OCI-LY7 (cell line): ENCODE measurements at regions of chr10 and their contacts with region 1.

Region 1: GRCh38 chr10:71696628-71697326 is 22.8 kb downstream of the C10orf105 start:
- DNase-seq: peak; percentile 77
- H3K4me3 ChIP-seq: no peak overlapping the region
- H3K27ac ChIP-seq: no peak overlapping the region
- H3K4me1 ChIP-seq: peaks cover 46% of the 10 kb centered on the region
- CTCF ChIP-seq: peak; percentile 99

Region 2: DNA sequence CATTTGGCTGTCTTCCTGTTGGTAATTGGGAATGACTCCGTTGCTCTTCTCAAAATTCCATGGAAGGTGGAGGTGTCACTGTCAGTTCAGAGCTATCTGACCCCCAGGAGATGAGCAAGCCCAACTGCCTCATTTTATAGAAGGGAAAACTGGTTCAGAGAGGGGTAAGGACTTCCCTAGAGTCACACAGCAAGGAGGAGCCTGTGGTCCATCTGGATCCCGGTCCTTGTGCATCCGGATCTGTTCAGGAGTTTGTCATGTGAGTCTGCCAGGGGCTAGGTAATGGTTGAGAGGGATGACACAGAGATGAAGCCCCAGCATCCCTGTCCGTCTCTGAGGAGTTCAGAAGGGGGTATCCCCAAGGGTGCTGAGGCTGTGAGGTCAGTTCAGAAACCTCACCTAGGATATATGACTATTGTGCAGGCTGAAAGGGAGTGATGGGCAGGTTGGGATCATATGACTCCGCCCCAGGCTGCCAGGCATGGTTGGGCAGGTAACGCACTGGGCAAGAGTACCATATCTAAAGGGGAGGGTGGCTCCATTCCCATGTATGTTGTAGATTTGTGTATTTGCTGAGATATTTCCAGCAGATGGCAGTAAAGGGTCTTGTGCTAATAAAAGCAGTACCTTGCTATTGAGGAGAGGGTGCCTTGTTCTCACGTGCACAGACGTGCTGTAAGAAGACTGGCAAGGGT is 393.8 kb before region 1 on chr10:
- CTCF ChIA-PET with region 1: no interaction called
- POLR2A ChIA-PET with region 1: no interaction called
- intact Hi-C with region 1: no loop called
- DNase-seq: peak; percentile 79
- H3K4me3 ChIP-seq: no peak overlapping the region
- H3K27ac ChIP-seq: no peak overlapping the region
- H3K4me1 ChIP-seq: no peaks in the 10 kb centered on the region
- CTCF ChIP-seq: peak; percentile 78

Region 3: DNA sequence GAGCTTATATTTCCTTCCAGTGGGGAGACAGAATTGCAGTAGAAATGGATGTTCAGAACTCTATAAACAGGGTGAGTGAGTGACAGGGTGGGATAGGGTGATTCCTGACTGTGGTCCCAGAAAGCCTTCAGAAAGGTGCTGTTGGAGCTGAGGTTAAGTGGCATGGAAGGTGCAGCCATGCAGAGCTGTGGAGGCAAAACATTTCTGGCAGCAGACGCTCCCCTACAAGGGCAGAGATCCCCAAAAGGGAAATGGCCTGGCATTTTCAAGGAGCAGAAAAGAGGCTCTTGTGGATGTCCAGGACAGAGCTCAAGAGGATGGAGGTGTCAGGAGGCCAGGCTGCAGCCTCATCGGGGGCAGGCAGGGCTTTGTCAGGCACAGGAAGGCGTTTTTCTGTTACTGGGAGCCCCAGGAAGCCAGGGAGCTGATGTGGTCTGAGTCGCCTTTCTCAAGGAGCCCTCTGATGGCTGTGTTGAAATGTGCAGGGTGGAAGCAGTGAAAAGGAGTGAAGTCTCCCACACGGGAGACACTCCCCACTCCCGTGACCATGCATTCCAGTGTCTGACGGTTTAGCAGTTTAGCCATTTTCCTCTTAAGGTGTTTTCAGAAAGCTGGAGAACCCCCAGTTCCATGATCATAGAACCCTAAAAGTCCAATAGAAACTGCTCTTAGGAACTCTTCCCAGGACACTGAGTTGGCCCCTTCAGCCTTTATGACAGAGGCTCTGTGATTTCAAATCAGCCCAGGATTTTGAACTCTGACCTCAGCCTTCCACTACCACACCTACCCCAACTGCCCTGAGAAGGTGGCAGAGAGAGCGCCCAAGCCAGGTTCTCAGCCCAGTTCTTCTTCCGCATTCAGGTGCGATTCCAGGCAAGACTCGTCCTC is 73.4 kb before region 1 on chr10:
- CTCF ChIA-PET with region 1: interaction called, 4 read pairs
- POLR2A ChIA-PET with region 1: no interaction called
- intact Hi-C with region 1: loop called (anchors 5 kb)
- DNase-seq: peak; percentile 75
- H3K4me3 ChIP-seq: no peak overlapping the region
- H3K27ac ChIP-seq: peak overlapping the region; percentile 84
- H3K4me1 ChIP-seq: peaks cover 83% of the 10 kb centered on the region
- CTCF ChIP-seq: peak; percentile 74

Region 4: GRCh38 chr10:71647526-71648253 is 49.1 kb before region 1 on chr10:
- CTCF ChIA-PET with region 1: no interaction called
- POLR2A ChIA-PET with region 1: interaction called, 4 read pairs
- intact Hi-C with region 1: loop called (anchors 2 kb)
- DNase-seq: peak; percentile 70
- H3K4me3 ChIP-seq: no peak overlapping the region
- H3K27ac ChIP-seq: peak overlapping the region; percentile 97
- H3K4me1 ChIP-seq: peaks cover 92% of the 10 kb centered on the region
- CTCF ChIP-seq: peak; percentile 83

Region 5: DNA sequence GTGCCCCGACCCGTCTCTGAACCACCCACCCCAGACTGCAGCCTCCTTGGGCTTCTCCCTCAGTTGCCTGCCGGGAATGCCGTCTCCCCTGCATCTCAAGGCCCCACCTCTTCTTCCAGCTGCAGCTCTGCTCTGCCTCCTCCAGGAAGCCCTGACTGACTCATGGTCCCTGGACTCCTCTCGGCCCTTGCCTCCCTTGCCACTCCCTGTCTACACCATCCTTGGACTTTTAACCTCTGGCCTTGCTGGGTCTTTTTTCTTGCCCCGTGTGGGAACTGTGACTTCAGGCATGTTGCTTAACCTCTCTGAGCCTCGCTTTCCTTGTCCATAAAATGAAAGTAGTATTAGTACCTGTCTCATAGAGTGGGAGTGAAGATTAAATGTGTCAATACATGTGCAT is 33.5 kb before region 1 on chr10:
- CTCF ChIA-PET with region 1: interaction called, 3 read pairs
- POLR2A ChIA-PET with region 1: interaction called, 3 read pairs
- intact Hi-C with region 1: loop called (anchors 5 kb)
- DNase-seq: no peak
- H3K4me3 ChIP-seq: no peak overlapping the region
- H3K27ac ChIP-seq: no peak overlapping the region
- H3K4me1 ChIP-seq: peaks cover 44% of the 10 kb centered on the region
- CTCF ChIP-seq: no peak

Region 6: GRCh38 chr10:71748671-71749191 is 52.0 kb after region 1 on chr10:
- CTCF ChIA-PET with region 1: no interaction called
- POLR2A ChIA-PET with region 1: no interaction called
- intact Hi-C with region 1: no loop called
- DNase-seq: peak; percentile 85
- H3K4me3 ChIP-seq: peak overlapping the region; percentile 25
- H3K27ac ChIP-seq: peak overlapping the region; percentile 88
- H3K4me1 ChIP-seq: peaks cover 75% of the 10 kb centered on the region
- CTCF ChIP-seq: peak; percentile 38; the same call in 1 of the 2 replicates